ENCODE measurements at regions of chr13 and their contacts with region 1.

Region 1: GRCh38 chr13:75864718-75865117 is 228.6 kb downstream of the LMO7 start:
- DNase-seq: no peak
- ATAC-seq: no peak
- H3K4me3 ChIP-seq: no peak overlapping the region
- H3K4me1 ChIP-seq: no peaks in the 10 kb centered on the region
- CTCF ChIP-seq: no peak

Region 2: DNA sequence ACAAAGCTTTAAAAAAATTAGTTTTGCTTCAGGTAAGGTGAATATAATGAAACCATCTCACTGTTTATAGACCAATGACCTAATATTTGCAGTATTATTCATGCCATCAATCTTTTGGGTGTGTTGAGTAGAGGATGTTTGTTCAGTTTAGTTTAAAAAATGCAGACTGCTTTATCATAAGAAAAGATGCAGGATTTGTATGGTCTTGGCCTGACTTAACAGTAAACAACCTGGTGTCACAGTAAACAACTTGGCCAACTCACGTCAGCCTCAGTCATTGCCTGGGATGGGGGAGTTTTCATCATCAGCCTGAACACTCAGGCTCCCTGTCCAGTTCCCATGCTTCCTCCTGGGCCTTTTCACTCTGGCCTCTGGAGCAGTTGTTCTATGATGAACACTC is 173.5 kb before region 1 on chr13:
- intact Hi-C with region 1: loop called in 1 of 2 experiments (anchors 10 kb)
- DNase-seq: no peak
- ATAC-seq: no peak
- H3K4me3 ChIP-seq: no peak overlapping the region
- H3K4me1 ChIP-seq: no peaks in the 10 kb centered on the region
- CTCF ChIP-seq: no peak